IMR-90 (cell line): ENCODE measurements at regions of chr10 and their contacts with region 1.

Region 1: GRCh38 chr10:93916257-93917063 is 22.7 kb downstream of the SLC35G1 start:
- DNase-seq: peak; percentile 52
- ATAC-seq: peak; percentile 57
- H3K4me3 ChIP-seq: no peak overlapping the region
- H3K27ac ChIP-seq: no peak overlapping the region
- H3K4me1 ChIP-seq: no peaks in the 10 kb centered on the region; the same call in 1 of the 2 replicates
- H3K27me3 ChIP-seq: no peaks in the 10 kb centered on the region
- CTCF ChIP-seq: peak; percentile 67
- POLR2A ChIP-seq: no peak
- RAD21 ChIP-seq: peak; percentile 74

Region 2: DNA sequence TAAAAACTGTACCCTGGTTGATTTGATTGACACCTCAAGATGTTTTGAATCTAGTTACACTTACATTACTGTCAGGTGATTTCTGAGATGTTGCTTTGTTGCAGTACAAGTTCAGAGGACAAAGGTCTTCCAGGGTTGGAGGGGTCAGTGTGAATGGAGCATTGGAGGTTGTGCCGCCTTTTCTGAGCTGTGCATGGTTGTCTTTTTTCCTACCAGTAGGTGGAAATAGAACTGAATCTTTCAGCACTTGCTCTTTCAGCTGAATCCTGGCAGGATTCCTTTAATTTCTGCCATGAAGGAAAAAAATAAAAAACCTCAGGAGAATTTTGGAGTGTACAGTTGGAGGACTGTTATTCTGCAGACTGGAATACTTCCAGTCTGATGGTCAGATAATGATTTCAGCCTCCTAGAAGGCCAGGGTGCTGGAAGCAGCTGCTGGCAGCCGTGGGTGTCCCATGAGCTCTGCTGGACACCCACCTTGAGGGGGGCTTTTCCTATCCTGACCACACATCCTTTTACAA is 159.9 kb after region 1 on chr10:
- CTCF ChIA-PET with region 1: interaction called, 3 read pairs
- POLR2A ChIA-PET with region 1: no interaction called
- dilution Hi-C with region 1: no loop called
- in situ Hi-C with region 1: no loop called
- intact Hi-C with region 1: loop called (anchors 5 kb)
- DNase-seq: peak; percentile 71
- ATAC-seq: peak; percentile 85
- H3K4me3 ChIP-seq: no peak overlapping the region
- H3K27ac ChIP-seq: no peak overlapping the region
- H3K4me1 ChIP-seq: peaks cover 1% of the 10 kb centered on the region; the same call in 1 of the 2 replicates
- H3K27me3 ChIP-seq: no peaks in the 10 kb centered on the region
- CTCF ChIP-seq: peak; percentile 73
- POLR2A ChIP-seq: no peak
- RAD21 ChIP-seq: peak; percentile 84

Region 3: DNA sequence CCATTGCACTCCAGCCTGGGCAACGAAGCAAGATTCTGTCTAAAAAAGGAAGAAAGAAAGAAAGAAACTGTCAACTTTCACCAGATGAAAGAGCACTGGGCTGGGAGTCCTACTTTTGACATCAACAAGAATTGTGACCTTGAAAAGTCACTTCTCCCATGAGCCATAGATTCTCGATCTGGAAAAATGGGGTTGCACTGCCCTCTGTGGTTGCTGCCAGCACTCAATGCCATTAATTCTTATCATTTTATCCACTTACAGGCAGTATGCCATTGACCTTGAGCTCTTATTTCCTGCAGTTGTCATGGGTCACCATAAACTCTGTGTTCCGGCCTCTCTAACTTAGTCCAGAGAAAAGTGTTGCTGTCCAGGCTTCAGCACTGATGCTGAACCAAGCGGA is 309.1 kb after region 1 on chr10:
- CTCF ChIA-PET with region 1: no interaction called
- POLR2A ChIA-PET with region 1: no interaction called
- dilution Hi-C with region 1: no loop called
- in situ Hi-C with region 1: no loop called
- intact Hi-C with region 1: loop called (anchors 10 kb)
- DNase-seq: no peak
- ATAC-seq: no peak
- H3K4me3 ChIP-seq: no peak overlapping the region
- H3K27ac ChIP-seq: no peak overlapping the region
- H3K4me1 ChIP-seq: peaks cover 2% of the 10 kb centered on the region
- H3K27me3 ChIP-seq: no peaks in the 10 kb centered on the region
- CTCF ChIP-seq: peak; percentile 31; the same call in 1 of the 2 replicates
- POLR2A ChIP-seq: no peak
- RAD21 ChIP-seq: peak; percentile 42; the same call in 1 of the 2 replicates

Region 4: DNA sequence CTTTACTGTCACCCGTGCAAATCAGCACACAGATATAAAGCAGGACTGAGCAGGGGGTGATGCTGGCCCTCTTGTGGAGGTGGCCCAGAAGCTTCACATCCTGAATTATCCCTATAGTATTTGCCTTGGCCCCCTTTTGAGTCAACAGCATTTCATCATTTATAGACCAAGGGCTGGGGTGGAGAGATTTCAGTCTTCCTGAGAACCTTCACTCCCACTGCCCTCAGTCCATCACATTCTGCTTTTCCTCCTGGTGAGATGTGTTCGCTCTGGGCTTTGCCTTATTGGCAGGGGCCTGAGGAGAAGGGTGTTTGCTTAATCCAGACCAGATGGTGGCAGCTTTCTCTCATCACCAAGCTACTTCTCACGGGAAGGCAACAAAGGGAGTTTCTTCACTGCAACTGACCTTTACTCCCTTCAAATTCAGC is 398.6 kb after region 1 on chr10:
- CTCF ChIA-PET with region 1: interaction called, 20 read pairs
- POLR2A ChIA-PET with region 1: no interaction called
- dilution Hi-C with region 1: no loop called
- in situ Hi-C with region 1: loop called (anchors 5 kb)
- intact Hi-C with region 1: loop called (anchors 1 kb)
- DNase-seq: peak; percentile 43
- ATAC-seq: 0 out of 2 replicates have a peak, but pooled peaks have one; percentile 25
- H3K4me3 ChIP-seq: no peak overlapping the region
- H3K27ac ChIP-seq: no peak overlapping the region
- H3K4me1 ChIP-seq: peaks cover 2% of the 10 kb centered on the region; the same call in 1 of the 2 replicates
- H3K27me3 ChIP-seq: no peaks in the 10 kb centered on the region
- CTCF ChIP-seq: no peak
- POLR2A ChIP-seq: no peak
- RAD21 ChIP-seq: no peak

Region 5: DNA sequence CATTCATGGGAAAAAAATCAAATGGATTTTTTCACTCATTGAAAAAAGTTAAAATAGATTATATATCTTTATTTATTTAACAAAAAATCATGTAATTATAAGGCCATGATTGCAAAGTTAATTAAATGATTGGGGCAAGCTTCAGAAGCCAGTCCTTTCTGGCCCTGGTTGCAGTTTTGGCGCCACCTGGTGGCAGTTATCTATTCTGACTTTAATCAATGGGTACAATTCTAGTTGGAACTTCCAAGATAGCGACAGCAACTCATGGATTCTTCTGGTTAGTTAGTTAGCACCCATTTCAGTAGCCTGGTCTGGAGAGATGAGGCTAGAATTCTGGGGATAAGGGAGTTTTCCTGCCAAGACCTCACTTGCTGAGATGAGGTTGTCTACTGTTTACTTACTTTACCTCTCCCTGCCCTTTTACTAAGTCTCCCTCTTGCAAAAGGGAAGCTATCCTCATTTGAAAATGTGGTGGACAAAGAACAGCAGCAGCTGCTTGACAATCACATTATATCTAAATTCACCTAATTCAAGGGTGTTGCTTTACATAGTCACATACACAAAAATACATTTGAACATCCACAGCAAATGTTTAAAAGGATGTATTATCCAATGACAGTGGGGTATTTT is 403.9 kb after region 1 on chr10:
- CTCF ChIA-PET with region 1: interaction called, 20 read pairs
- POLR2A ChIA-PET with region 1: no interaction called
- dilution Hi-C with region 1: no loop called
- in situ Hi-C with region 1: loop called (anchors 5 kb)
- intact Hi-C with region 1: loop called (anchors 1 kb)
- DNase-seq: peak; percentile 52
- ATAC-seq: peak; percentile 64
- H3K4me3 ChIP-seq: no peak overlapping the region
- H3K27ac ChIP-seq: no peak overlapping the region
- H3K4me1 ChIP-seq: peaks cover 2% of the 10 kb centered on the region; the same call in 1 of the 2 replicates
- H3K27me3 ChIP-seq: no peaks in the 10 kb centered on the region
- CTCF ChIP-seq: peak; percentile 87
- POLR2A ChIP-seq: 0 out of 2 replicates have a peak, but pooled peaks have one; percentile 30
- RAD21 ChIP-seq: peak; percentile 91

Region 6: DNA sequence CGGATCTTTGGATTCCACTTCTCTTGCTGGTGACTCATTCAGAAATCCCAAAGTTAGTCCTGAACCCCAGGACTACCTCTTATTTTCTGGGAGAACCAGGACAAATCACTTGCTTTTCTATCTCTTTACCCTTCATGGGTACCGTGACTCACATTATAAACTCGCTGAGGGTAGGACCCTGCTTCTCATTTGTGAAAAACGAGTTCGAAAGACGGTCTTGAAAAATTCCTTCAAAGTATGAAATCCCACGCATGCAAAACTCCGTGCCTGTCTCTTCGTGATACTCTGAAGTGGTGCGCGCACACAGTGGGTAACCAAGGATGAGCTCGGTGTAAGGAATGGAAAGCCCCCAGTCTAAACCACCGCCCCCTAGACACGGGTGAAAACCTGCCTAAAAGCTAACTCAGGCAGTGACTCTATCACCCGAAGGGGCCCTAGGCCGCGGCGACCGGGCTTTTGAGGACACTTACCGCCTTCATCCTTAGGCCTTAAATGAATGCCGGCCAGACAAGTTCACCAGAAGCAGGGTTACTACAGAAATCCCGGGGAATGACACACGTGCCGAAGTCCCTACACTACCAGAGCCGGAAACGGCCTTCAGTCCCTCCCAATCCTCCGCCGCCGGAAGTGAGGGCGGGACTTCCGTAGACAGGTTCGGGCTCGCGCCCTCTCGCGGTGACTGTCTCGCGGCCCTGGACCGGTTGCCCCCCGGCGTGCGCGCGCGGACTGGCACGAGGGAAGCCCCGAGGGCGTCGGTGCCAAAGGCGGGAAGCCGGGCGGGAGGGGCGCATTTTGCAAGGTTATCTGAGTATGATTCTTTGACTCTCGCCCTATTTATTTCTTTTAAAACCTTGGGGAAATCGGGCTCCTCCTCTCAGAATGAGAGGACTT is 446.1 kb after region 1 on chr10 and contains the start of gene NOC3L:
- CTCF ChIA-PET with region 1: interaction called, 3 read pairs
- POLR2A ChIA-PET with region 1: no interaction called
- dilution Hi-C with region 1: no loop called
- in situ Hi-C with region 1: no loop called
- intact Hi-C with region 1: loop called (anchors 2 kb)
- DNase-seq: peak; percentile 96
- ATAC-seq: peak; percentile 97
- H3K4me3 ChIP-seq: peak within 1 kb of the TSS; percentile 64
- H3K27ac ChIP-seq: peak within 1 kb of the TSS; percentile 56
- H3K4me1 ChIP-seq: peaks cover 2% of the 10 kb centered on the region
- H3K27me3 ChIP-seq: no peaks in the 10 kb centered on the region; the same call in 1 of the 2 replicates
- CTCF ChIP-seq: peak; percentile 99
- POLR2A ChIP-seq: peak; percentile 89
- RAD21 ChIP-seq: peak; percentile 51
- total RNA-seq, gene NOC3L: 26.5 and 40.5 TPM in 2 replicates